ENCODE measurements at regions of chr13 and their contacts with region 1.

Region 1: GRCh38 chr13:49996951-49997895 is at the start of gene TRIM13:
- DNase-seq: peak; percentile 73 to 83
- H3K4me3 ChIP-seq: peak within 1 kb of the TSS; percentile 98
- H3K27ac ChIP-seq: peak within 1 kb of the TSS; percentile 93
- H3K4me1 ChIP-seq: peaks cover 13% of the 10 kb centered on the region
- H3K27me3 ChIP-seq: no peaks in the 10 kb centered on the region
- CTCF ChIP-seq: peak; percentile 78
- total RNA-seq, gene TRIM13: 13.4 and 15.1 TPM in 2 replicates

Region 2: DNA sequence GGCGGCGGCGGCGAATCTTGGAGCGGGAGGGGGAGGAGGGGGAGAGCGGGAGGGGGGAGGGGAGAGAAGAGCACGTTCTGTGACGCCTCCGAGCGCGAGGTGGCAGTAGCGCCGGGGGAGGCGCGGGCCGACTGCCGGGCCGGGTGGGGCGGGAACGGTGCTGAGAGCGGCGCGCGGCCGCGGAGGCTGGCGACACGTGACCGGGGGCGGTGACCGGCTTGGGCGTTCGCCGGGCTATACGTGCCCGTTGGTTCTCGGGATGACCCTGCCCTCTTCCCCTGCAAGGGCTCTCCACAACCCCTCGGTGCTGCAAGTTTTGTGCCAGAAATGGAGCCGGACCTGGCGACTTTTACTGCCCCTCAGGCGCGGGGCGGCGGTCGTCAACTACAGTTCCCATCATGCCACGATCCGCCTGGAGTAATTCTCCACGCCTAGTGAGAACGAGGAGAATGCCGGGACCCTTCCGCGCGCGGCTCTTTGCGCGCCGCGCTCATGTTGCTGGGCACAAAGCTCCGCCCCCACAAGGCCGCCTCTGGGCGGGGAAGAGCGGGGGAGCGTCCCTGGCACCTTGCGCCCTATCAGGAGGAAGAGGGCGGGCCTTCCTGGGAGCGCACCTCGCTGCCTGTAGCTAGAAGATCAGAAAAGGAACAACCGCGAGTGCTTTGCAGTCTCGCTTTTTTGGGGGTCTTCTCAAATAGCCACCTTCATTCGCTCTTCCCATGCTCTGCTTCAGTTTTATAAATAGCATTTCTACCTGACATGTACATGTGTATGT is 204.5 kb before region 1 on chr13 and contains the start of gene KPNA3:
- CTCF ChIA-PET with region 1: interaction called, 15 read pairs
- POLR2A ChIA-PET with region 1: interaction called, 4 read pairs
- intact Hi-C with region 1: no loop called
- DNase-seq: peak; percentile 87 to 93
- H3K4me3 ChIP-seq: peak within 1 kb of the TSS; percentile 68
- H3K27ac ChIP-seq: peak within 1 kb of the TSS; percentile 79
- H3K4me1 ChIP-seq: peaks cover 24% of the 10 kb centered on the region
- H3K27me3 ChIP-seq: no peaks in the 10 kb centered on the region
- CTCF ChIP-seq: no peak
- total RNA-seq, gene KPNA3: 21.2 and 35.0 TPM in 2 replicates

Region 3: GRCh38 chr13:49877629-49878218 is 119.5 kb before region 1 on chr13:
- CTCF ChIA-PET with region 1: no interaction called
- POLR2A ChIA-PET with region 1: no interaction called
- intact Hi-C with region 1: no loop called
- DNase-seq: no peak
- H3K4me3 ChIP-seq: no peak overlapping the region
- H3K27ac ChIP-seq: no peak overlapping the region
- H3K4me1 ChIP-seq: no peaks in the 10 kb centered on the region
- H3K27me3 ChIP-seq: no peaks in the 10 kb centered on the region
- CTCF ChIP-seq: no peak

Region 4: GRCh38 chr13:49890376-49890775 is 106.8 kb before region 1 on chr13:
- CTCF ChIA-PET with region 1: no interaction called
- POLR2A ChIA-PET with region 1: interaction called, 14 read pairs
- intact Hi-C with region 1: no loop called
- DNase-seq: no peak
- H3K4me3 ChIP-seq: no peak overlapping the region
- H3K27ac ChIP-seq: no peak overlapping the region
- H3K4me1 ChIP-seq: no peaks in the 10 kb centered on the region
- H3K27me3 ChIP-seq: no peaks in the 10 kb centered on the region
- CTCF ChIP-seq: no peak

Region 5: DNA sequence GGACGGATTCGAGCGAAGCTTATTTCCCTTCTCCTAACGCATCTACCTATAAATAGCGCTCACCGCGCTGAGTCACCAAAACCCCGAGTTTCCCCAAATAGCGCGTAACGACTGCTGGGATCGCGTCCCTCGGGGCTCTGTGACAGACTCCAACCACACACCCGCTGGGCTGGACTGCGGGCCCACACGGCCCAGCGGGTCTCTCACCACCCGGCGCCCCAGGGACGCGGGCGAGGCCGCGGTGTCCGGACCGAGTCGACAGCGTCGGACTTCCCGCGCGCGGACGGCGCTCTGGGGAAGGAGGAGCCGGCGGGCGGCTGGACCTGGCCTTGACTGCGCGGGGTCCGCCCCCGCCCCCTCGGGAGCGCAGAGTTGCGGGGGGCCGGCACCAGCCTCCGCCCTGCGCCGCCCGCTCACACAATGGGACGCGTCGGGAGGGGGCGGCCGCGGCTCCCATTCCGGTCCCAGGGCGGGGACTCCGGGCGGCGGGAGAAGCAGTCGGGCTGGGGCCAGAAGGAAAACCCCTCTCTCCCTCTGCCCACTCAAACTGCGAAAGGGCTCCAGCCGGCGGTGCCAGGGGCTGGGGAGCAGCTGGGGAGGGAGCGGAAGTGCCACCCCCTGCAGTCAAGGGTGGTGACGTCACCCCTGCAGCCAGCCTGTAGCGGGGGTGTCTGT is 126.8 kb after region 1 on chr13:
- CTCF ChIA-PET with region 1: no interaction called
- POLR2A ChIA-PET with region 1: no interaction called
- intact Hi-C with region 1: loop called (anchors 2 kb)
- DNase-seq: peak; percentile 82 to 93
- H3K4me3 ChIP-seq: peak overlapping the region; percentile 91
- H3K27ac ChIP-seq: peak overlapping the region; percentile 80
- H3K4me1 ChIP-seq: peaks cover 24% of the 10 kb centered on the region
- H3K27me3 ChIP-seq: no peaks in the 10 kb centered on the region
- CTCF ChIP-seq: no peak

Region 6: DNA sequence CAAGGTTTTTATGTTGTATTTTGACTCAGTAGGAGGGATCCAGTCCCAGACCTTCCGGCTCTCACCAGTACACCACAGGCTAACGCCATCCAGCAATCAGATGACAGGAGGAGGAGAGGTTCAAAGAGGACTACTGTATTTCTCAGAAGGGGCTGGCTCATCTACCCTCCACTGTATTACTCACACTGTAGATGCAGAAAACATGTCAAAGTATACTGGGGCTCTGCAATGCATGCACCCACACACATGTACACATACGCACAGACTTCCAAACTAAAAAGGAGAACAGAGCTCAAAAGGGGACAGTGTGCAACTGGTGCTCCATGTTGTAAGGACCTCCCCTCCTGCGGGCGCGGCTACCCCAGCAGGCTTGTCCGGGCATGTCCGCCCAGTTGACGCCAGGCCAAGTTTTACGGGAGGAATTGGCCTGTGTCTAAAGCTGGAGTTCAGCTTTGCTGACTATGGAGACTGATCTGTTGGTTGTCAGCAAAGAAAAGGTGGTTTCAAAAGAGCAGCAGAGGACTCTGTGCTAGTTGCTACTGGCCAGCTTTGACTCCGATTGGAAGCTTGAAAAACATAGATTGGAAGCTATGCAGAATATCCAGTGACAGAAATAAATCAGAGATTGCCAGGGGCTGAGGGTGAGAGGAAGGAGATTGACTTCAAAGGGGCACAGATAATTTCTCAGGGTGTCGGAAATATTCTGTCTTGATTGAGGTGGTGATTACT is 532.1 kb after region 1 on chr13:
- CTCF ChIA-PET with region 1: interaction called, 6 read pairs
- POLR2A ChIA-PET with region 1: interaction called, 4 read pairs
- intact Hi-C with region 1: loop called (anchors 5 kb)
- DNase-seq: peak in 1 of 2 experiments; percentile 67
- H3K4me3 ChIP-seq: no peak overlapping the region
- H3K27ac ChIP-seq: no peak overlapping the region
- H3K4me1 ChIP-seq: no peaks in the 10 kb centered on the region
- H3K27me3 ChIP-seq: no peaks in the 10 kb centered on the region
- CTCF ChIP-seq: no peak